Cardiac septum (tissue), 1 donor: ENCODE measurements at regions of chr1 and their contacts with region 1.

Region 1: GRCh38 chr1:89843281-89844121 is 22.7 kb downstream of the LRRC8D start:
- DNase-seq: peak; percentile 89

Region 2: DNA sequence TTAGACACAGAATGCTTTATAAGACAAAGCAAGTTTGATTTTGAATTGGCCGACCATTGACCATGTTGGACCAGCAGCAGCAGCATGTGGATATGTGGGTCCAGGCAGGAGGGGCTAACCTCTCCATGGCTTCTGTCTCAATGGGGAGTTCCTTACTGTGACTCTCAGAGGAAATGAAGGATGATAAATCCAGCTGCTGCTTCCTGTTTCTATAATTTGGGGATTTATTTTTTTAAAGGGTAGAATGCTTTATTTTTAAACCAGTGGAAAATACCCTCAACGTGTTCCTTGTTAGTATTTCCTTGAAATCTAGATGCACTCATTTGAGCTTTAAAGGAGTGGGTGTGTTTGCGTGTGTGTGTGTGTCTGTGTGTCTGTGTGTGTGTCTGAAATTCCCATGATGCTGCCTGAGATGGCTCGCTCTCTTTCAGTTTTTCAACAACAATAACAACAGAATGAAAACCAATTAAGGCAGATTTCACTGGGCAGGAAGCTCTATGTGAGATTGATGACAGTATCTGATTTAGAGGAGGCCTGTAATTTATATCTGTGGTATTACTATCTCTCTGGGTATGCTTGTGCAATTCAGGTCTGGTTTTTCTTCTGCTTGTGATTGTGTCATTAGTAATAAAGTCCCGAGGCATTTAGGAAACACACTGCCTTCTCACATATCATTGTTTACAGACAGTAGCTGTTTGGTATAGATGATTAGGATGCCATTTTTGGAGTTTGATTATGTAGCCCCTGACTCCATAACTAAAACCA is 65.4 kb after region 1 on chr1:
- intact Hi-C with region 1: loop called (anchors 5 kb)
- DNase-seq: no peak

Region 3: GRCh38 chr1:89987170-89987819 is 143.8 kb after region 1 on chr1:
- intact Hi-C with region 1: loop called (anchors 5 kb)
- DNase-seq: no peak